T-cell (primary cell): ENCODE measurements at regions of chr6 and their contacts with region 1.

Region 1: DNA sequence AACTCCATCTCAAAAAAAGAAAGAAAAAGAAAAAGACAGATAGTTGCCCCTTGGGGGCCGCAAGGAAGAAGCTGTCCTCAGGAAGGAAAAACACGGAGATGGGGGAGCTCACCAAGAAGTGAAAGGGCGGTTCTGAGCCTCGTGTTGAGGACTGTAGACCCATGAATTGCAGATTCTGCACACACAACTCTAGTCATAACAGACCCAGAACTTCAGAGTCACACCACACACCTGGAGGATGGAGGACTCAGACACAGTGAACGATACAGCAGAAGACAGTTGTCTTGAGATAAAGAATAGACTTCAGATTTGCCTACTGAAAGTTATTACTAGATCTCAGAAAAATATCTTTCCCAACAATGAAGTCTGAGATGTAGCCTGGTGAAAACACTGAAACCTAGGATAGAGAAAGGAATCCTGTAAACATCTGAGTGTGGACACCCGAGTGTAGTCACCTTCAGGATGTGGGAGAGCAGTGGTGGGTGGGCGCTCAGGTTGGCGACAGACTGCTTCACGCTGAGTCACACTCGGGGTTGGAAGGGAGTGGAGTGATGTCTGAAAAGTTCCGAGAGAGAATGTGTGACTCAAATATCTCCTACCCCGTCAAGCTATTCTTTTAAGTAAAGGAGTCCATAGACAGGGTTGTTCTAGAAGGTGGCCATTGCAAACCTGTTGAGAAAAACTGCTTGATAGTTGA is 88.1 kb downstream of the MAP3K4 start:
- DNase-seq: peak in 25 of 35 experiments; percentile 6 to 59 (median 26)
- ATAC-seq: peak; percentile 39 to 74 (median 52)
- H3K4me3 ChIP-seq: no peak overlapping the region
- H3K4me3 Mint-ChIP-seq: peak overlapping the region in 2 of 3 donors; percentile 12 to 29
- H3K27ac ChIP-seq: peak overlapping the region; percentile 87
- H3K27ac Mint-ChIP-seq: no peak overlapping the region
- H3K4me1 ChIP-seq: peaks cover 2 to 53% of the 10 kb centered on the region in 2 experiments
- H3K4me1 Mint-ChIP-seq: peaks cover 0 to 16% (median 11%) of the 10 kb centered on the region in 3 donors
- H3K27me3 ChIP-seq: no peaks in the 10 kb centered on the region
- H3K27me3 Mint-ChIP-seq: no peaks in the 10 kb centered on the region

Region 2: GRCh38 chr6:160960839-160961238 is 118.9 kb before region 1 on chr6:
- CTCF ChIA-PET with region 1: no interaction called
- POLR2A ChIA-PET with region 1: no interaction called
- DNase-seq: no peak
- ATAC-seq: no peak
- H3K4me3 ChIP-seq: no peak overlapping the region
- H3K4me3 Mint-ChIP-seq: no peak overlapping the region
- H3K27ac ChIP-seq: no peak overlapping the region
- H3K27ac Mint-ChIP-seq: no peak overlapping the region
- H3K4me1 ChIP-seq: no peaks in the 10 kb centered on the region
- H3K4me1 Mint-ChIP-seq: no peaks in the 10 kb centered on the region
- H3K27me3 ChIP-seq: peaks cover 0 to 18% of the 10 kb centered on the region in 2 experiments
- H3K27me3 Mint-ChIP-seq: peaks cover 12 to 14% of the 10 kb centered on the region in 2 donors

Region 3: GRCh38 chr6:160992061-160992979 is 87.4 kb before region 1 on chr6:
- CTCF ChIA-PET with region 1: interaction called in 1 of 2 experiments, 8 read pairs
- POLR2A ChIA-PET with region 1: interaction called in 1 of 2 experiments, 16 read pairs
- DNase-seq: peak in 33 of 35 experiments; percentile 7 to 68 (median 36)
- ATAC-seq: peak; percentile 45 to 69 (median 52)
- H3K4me3 ChIP-seq: peak overlapping the region; percentile 95 to 98
- H3K4me3 Mint-ChIP-seq: peak overlapping the region; percentile 88 to 97 (median 93)
- H3K27ac ChIP-seq: peak overlapping the region; percentile 88
- H3K27ac Mint-ChIP-seq: peak overlapping the region; percentile 87 to 95
- H3K4me1 ChIP-seq: peaks cover 4 to 16% of the 10 kb centered on the region in 2 experiments
- H3K4me1 Mint-ChIP-seq: peaks cover 46 to 49% (median 47%) of the 10 kb centered on the region in 3 donors
- H3K27me3 ChIP-seq: no peaks in the 10 kb centered on the region
- H3K27me3 Mint-ChIP-seq: peaks cover 0 to 4% of the 10 kb centered on the region in 2 donors

Region 4: GRCh38 chr6:161038229-161039031 is 41.3 kb before region 1 on chr6:
- CTCF ChIA-PET with region 1: no interaction called
- POLR2A ChIA-PET with region 1: interaction called, 3 to 10 read pairs
- DNase-seq: no peak
- ATAC-seq: no peak
- H3K4me3 ChIP-seq: no peak overlapping the region
- H3K4me3 Mint-ChIP-seq: no peak overlapping the region
- H3K27ac ChIP-seq: no peak overlapping the region
- H3K27ac Mint-ChIP-seq: peak overlapping the region in 1 of 2 donors; percentile 52
- H3K4me1 ChIP-seq: no peaks in the 10 kb centered on the region
- H3K4me1 Mint-ChIP-seq: peaks cover 19 to 35% (median 24%) of the 10 kb centered on the region in 3 donors
- H3K27me3 ChIP-seq: no peaks in the 10 kb centered on the region
- H3K27me3 Mint-ChIP-seq: no peaks in the 10 kb centered on the region